Spleen (tissue), 13 donors: ENCODE measurements at regions of chr14 and their contacts with region 1.

Region 1: DNA sequence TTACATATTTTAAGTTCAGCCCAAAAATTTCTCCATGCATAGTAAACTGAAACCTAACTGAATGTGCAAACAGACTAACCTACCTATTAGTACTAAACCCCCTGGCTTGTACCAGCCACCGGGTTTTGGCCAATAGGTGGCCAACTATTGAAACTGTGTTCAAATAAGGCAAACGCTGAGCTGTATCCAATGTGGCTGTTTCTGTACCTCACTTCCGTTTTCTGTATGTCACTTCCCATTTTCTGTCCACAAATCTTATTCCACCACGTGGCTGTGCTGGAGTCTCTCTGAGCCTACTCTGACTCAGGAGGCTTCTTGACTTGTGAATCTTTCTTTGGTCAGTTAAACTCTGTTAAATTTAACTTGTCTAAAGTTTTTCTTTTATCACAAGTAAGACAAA is 6.0 kb upstream of the FBXO34 start:
- DNase-seq: no peak
- H3K4me3 ChIP-seq: no peak overlapping the region
- H3K27ac ChIP-seq: no peak overlapping the region
- H3K4me1 ChIP-seq: no peaks in the 10 kb centered on the region
- H3K27me3 ChIP-seq: peaks cover 0 to 6% (median 0%) of the 10 kb centered on the region in 7 donors
- CTCF ChIP-seq: no peak
- POLR2A ChIP-seq: no peak

Region 2: GRCh38 chr14:55212634-55213033 is 52.6 kb before region 1 on chr14:
- intact Hi-C with region 1: no loop called
- DNase-seq: no peak
- H3K4me3 ChIP-seq: no peak overlapping the region
- H3K27ac ChIP-seq: no peak overlapping the region
- H3K4me1 ChIP-seq: peaks cover 0 to 6% (median 1%) of the 10 kb centered on the region in 6 donors
- H3K27me3 ChIP-seq: no peaks in the 10 kb centered on the region
- CTCF ChIP-seq: no peak
- POLR2A ChIP-seq: no peak

Region 3: GRCh38 chr14:55354500-55354899 is 89.3 kb after region 1 on chr14:
- intact Hi-C with region 1: loop called (anchors 5 kb)
- DNase-seq: no peak
- H3K4me3 ChIP-seq: no peak overlapping the region
- H3K27ac ChIP-seq: peak overlapping the region in 5 of 8 donors; percentile 17 to 73 (median 65)
- H3K4me1 ChIP-seq: peaks cover 0 to 30% (median 7%) of the 10 kb centered on the region in 6 donors
- H3K27me3 ChIP-seq: no peaks in the 10 kb centered on the region
- CTCF ChIP-seq: peak in 8 of 11 experiments; percentile 14 to 70 (median 56)
- POLR2A ChIP-seq: no peak

Region 4: DNA sequence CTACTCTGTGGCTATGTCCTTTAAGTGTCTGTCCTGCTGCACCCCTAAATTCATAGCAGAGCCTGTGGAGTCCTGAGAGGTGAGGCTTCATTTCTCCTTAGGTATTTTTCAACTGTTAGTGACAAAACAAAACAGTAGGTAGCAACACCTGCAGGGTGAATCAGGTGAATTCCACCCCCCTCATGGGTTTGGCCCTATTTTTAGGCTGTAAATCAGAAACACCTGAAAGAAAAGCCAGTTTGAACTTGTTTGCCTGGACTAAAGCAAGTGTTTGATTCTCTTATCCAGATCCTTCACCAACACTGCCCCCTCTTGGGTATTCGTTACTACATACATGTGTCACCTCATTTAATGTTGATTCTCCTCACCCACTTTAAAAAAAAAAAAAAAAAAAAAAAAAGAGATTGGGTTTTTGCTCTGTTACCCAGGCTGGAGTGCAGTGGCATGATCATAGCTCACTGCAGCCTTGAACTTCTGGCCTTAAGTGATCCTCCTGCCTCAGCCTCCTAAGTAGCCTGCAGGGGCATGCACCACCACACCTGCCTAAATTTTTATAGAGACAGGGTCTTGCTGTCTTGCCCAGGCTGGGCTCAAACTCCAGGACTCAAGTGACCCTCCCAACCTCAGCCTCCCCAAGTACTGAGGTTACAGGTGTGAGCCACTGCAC is 165.0 kb after region 1 on chr14:
- intact Hi-C with region 1: loop called (anchors 10 kb)
- DNase-seq: no peak
- H3K4me3 ChIP-seq: no peak overlapping the region
- H3K27ac ChIP-seq: no peak overlapping the region
- H3K4me1 ChIP-seq: peaks cover 0 to 20% (median 1%) of the 10 kb centered on the region in 6 donors
- H3K27me3 ChIP-seq: no peaks in the 10 kb centered on the region
- CTCF ChIP-seq: peak in 8 of 11 experiments; percentile 24 to 65 (median 40)
- POLR2A ChIP-seq: no peak